ENCODE measurements at regions of chr14 and their contacts with region 1.

Region 1: DNA sequence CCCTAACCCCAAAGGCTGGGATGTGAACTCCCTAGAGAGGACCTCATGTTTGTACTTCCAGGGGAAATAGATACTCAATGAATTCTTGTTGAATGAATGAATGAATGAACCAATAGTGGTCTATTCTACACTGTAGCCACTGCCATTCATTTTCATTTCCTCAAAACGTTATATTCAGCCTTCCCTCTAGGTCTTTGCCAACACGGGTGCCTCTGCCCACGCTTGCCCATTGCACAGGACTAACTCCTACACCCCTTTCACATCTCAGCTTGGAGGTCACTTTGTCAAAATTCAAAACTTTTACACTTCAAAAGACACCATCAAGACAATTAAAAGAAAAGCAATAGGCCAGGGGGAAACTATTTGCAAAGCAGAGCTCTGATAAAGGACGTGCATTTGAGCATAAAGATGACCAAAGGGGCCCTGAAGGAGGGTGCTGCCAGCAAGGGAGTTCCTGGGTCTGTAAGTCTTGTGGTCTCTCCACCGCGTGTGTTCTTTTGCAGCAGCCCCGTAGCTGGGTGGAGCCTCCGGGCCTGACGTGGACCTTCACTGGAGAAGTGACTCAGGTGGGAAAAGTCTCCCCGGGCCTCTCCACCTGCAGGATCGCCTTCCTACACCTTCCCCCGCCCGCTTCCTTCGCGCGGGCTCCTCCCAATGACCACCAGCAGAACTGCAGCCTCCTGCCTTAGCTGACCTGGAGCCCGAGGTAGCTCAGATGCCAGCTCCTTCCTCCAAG is 31.5 kb downstream of the TMEM63C start:
- DNase-seq: peak; percentile 38 to 90
- H3K4me3 ChIP-seq: no peak overlapping the region
- H3K27ac ChIP-seq: no peak overlapping the region
- H3K4me1 ChIP-seq: peaks cover 0 to 6% (median 3%) of the 10 kb centered on the region in 4 experiments; a peak in 5 of 7 replicates
- H3K27me3 ChIP-seq: no peaks in the 10 kb centered on the region
- CTCF ChIP-seq: peak; percentile 82 to 92 (median 90)
- EP300 ChIP-seq: no peak
- POLR2A ChIP-seq: no peak
- RAD21 ChIP-seq: peak; percentile 82 to 86

Region 2: DNA sequence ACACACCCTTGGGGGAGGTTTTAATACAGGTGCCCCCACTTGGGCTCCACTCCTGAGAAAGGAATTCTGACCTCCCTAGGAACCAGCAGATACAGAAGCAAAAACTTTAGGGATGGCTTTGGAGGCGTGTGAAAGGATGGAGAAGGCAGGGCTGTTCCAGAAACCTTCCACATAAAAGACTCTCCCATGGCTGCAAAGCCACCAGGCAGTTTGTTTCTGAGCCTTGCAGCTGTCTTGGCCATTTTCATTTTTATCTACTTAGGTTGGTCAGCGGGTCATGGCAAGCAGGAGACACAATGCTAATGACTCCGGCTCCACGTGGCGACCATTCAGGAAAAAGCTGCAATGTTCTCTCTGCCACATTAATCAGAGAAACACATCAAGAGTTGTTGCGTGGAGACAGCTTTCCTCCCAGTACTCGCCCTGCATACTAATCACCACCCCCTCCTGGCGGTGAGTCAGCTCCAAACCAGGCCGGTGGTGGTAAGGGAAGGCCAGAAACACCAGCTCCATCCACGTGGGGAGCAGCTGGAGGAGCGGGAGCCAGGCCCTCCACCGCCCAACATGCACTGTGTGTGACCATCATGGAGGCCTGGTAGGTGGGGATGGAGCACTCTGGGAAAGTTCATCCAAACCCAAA is 153.7 kb before region 1 on chr14:
- CTCF ChIA-PET with region 1: no interaction called
- POLR2A ChIA-PET with region 1: no interaction called
- DNase-seq: no peak
- H3K4me3 ChIP-seq: no peak overlapping the region
- H3K27ac ChIP-seq: no peak overlapping the region
- H3K4me1 ChIP-seq: peaks cover 3 to 12% (median 4%) of the 10 kb centered on the region in 4 experiments; a peak in 5 of 7 replicates
- H3K27me3 ChIP-seq: no peaks in the 10 kb centered on the region
- CTCF ChIP-seq: peak; percentile 46 to 60 (median 55)
- EP300 ChIP-seq: no peak
- POLR2A ChIP-seq: no peak
- RAD21 ChIP-seq: peak; percentile 47 to 56; a peak in 3 of 4 replicates

Region 3: GRCh38 chr14:77124345-77125280 is 88.5 kb before region 1 on chr14:
- CTCF ChIA-PET with region 1: interaction called, 21 read pairs
- POLR2A ChIA-PET with region 1: interaction called, 3 read pairs
- DNase-seq: peak in 1 of 2 experiments; percentile 81
- H3K4me3 ChIP-seq: peak overlapping the region; percentile 62 to 79 (median 68)
- H3K27ac ChIP-seq: no peak overlapping the region
- H3K4me1 ChIP-seq: peaks cover 20 to 36% (median 24%) of the 10 kb centered on the region in 4 experiments
- H3K27me3 ChIP-seq: peaks cover 0 to 2% (median 0%) of the 10 kb centered on the region in 4 experiments; a peak in 1 of 7 replicates
- CTCF ChIP-seq: peak; percentile 66 to 78 (median 68)
- EP300 ChIP-seq: no peak
- POLR2A ChIP-seq: peak in 1 of 2 experiments; percentile 30; a peak in 1 of 3 replicates
- RAD21 ChIP-seq: peak; percentile 33 to 65; a peak in 3 of 4 replicates

Region 4: GRCh38 chr14:77139540-77140358 is 73.4 kb before region 1 on chr14:
- CTCF ChIA-PET with region 1: interaction called, 61 read pairs
- POLR2A ChIA-PET with region 1: interaction called, 4 read pairs
- DNase-seq: peak in 1 of 2 experiments; percentile 93
- H3K4me3 ChIP-seq: peak overlapping the region; percentile 69 to 79 (median 78)
- H3K27ac ChIP-seq: no peak overlapping the region
- H3K4me1 ChIP-seq: peaks cover 9 to 37% (median 22%) of the 10 kb centered on the region in 4 experiments
- H3K27me3 ChIP-seq: peaks cover 0 to 4% (median 2%) of the 10 kb centered on the region in 4 experiments; a peak in 3 of 7 replicates
- CTCF ChIP-seq: peak; percentile 73 to 90 (median 79)
- EP300 ChIP-seq: peak in 1 of 2 experiments; percentile 51; a peak in 1 of 3 replicates
- POLR2A ChIP-seq: no peak
- RAD21 ChIP-seq: peak; percentile 76 to 77

Region 5: GRCh38 chr14:77151918-77152588 is 61.1 kb before region 1 on chr14:
- CTCF ChIA-PET with region 1: interaction called, 233 read pairs
- POLR2A ChIA-PET with region 1: interaction called, 8 read pairs
- DNase-seq: no peak
- H3K4me3 ChIP-seq: no peak overlapping the region
- H3K27ac ChIP-seq: no peak overlapping the region
- H3K4me1 ChIP-seq: peaks cover 2 to 15% (median 2%) of the 10 kb centered on the region in 4 experiments; a peak in 3 of 7 replicates
- H3K27me3 ChIP-seq: no peaks in the 10 kb centered on the region
- CTCF ChIP-seq: peak in 1 of 3 experiments; percentile 12; a peak in 1 of 4 replicates
- EP300 ChIP-seq: no peak
- POLR2A ChIP-seq: no peak
- RAD21 ChIP-seq: peak; percentile 29 to 43

Region 6: GRCh38 chr14:77228056-77228455 is 14.9 kb after region 1 on chr14:
- CTCF ChIA-PET with region 1: interaction called, 75 read pairs
- POLR2A ChIA-PET with region 1: interaction called, 7 read pairs
- DNase-seq: no peak
- H3K4me3 ChIP-seq: no peak overlapping the region
- H3K27ac ChIP-seq: no peak overlapping the region
- H3K4me1 ChIP-seq: peaks cover 7 to 19% (median 11%) of the 10 kb centered on the region in 4 experiments
- H3K27me3 ChIP-seq: no peaks in the 10 kb centered on the region
- CTCF ChIP-seq: peak in 1 of 3 experiments; percentile 21; a peak in 1 of 4 replicates
- EP300 ChIP-seq: no peak
- POLR2A ChIP-seq: no peak
- RAD21 ChIP-seq: no peak

Region 7: DNA sequence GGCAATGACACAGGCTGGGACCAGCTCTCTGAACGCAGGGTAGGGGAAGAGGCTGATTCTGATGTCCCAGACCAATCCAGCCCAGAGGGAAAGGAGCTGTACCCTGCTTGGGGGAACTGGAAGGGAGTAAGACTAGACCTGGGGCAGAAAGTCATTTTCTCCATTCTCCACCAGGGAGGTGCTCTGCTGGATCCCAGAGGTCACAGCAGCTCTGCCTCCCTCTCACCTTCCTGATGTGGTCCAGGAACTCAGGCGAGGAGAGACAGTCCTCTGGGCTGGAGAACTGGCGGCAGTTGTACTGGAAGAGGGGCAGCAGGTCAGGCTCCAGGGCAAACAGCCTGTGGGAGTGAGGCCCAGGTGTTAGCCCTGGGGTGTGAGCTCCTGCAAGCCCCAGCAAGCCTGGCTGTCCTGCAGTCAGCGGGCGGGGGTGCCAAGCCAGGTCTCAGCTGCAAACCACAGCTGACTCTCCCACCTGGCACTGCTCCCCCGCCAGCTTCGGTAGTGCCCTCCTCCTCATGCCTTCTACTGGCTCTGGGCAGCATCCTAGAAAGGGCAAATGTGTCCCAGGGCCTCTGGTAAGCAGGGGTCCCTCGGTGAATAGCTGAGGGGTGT is 56.0 kb after region 1 on chr14:
- CTCF ChIA-PET with region 1: interaction called, 25 read pairs
- POLR2A ChIA-PET with region 1: no interaction called
- DNase-seq: no peak
- H3K4me3 ChIP-seq: no peak overlapping the region
- H3K27ac ChIP-seq: no peak overlapping the region
- H3K4me1 ChIP-seq: peaks cover 0 to 9% (median 5%) of the 10 kb centered on the region in 4 experiments; a peak in 3 of 7 replicates
- H3K27me3 ChIP-seq: peaks cover 15 to 49% (median 41%) of the 10 kb centered on the region in 4 experiments
- CTCF ChIP-seq: no peak
- EP300 ChIP-seq: no peak
- POLR2A ChIP-seq: no peak
- RAD21 ChIP-seq: peak in 1 of 2 experiments; percentile 5; a peak in 1 of 4 replicates

Region 8: DNA sequence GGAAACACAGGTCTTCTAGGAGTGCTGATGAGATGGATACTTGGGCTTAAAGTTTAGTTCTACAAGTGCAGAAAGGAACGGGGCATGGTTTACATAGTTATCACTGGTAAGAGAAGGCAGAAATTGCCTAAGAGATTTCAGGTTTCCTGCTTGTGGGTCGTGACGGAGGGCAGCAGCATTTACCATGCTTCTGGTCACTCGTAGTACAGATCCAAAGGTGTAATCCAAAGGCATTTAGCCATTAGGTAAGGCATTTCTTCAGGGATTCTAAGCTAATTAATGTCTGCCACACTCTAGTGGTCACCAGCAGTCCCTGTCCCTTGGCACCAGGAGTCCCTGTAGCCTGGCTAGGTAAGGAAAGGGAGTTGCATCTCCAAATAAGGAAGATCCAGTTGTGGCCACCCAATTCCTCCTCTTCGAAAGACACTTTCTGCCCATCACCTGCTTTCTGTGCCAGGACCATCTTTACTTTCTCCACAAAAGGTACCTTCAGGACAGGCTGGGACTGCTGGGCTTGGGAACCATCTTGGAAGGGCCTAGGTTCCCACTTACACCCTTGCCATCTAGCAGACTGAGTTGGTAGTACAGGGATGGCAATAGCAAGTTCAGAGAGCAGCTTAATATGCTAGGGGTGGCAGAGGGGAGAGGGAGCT is 109.3 kb after region 1 on chr14:
- CTCF ChIA-PET with region 1: no interaction called
- POLR2A ChIA-PET with region 1: no interaction called
- DNase-seq: no peak
- H3K4me3 ChIP-seq: peak overlapping the region; percentile 63 to 93 (median 91); a peak in 6 of 8 replicates
- H3K27ac ChIP-seq: no peak overlapping the region
- H3K4me1 ChIP-seq: peaks cover 4 to 18% (median 8%) of the 10 kb centered on the region in 4 experiments; a peak in 6 of 7 replicates
- H3K27me3 ChIP-seq: no peaks in the 10 kb centered on the region
- CTCF ChIP-seq: no peak
- EP300 ChIP-seq: no peak
- POLR2A ChIP-seq: no peak
- RAD21 ChIP-seq: no peak

Region 9: GRCh38 chr14:77641534-77642341 is 428.6 kb after region 1 on chr14:
- CTCF ChIA-PET with region 1: no interaction called
- POLR2A ChIA-PET with region 1: no interaction called
- DNase-seq: no peak
- H3K4me3 ChIP-seq: no peak overlapping the region
- H3K27ac ChIP-seq: no peak overlapping the region
- H3K4me1 ChIP-seq: no peaks in the 10 kb centered on the region
- H3K27me3 ChIP-seq: no peaks in the 10 kb centered on the region
- CTCF ChIP-seq: no peak
- EP300 ChIP-seq: no peak
- POLR2A ChIP-seq: no peak
- RAD21 ChIP-seq: no peak